ENCODE measurements at regions of chr7 and their contacts with region 1.

Region 1: DNA sequence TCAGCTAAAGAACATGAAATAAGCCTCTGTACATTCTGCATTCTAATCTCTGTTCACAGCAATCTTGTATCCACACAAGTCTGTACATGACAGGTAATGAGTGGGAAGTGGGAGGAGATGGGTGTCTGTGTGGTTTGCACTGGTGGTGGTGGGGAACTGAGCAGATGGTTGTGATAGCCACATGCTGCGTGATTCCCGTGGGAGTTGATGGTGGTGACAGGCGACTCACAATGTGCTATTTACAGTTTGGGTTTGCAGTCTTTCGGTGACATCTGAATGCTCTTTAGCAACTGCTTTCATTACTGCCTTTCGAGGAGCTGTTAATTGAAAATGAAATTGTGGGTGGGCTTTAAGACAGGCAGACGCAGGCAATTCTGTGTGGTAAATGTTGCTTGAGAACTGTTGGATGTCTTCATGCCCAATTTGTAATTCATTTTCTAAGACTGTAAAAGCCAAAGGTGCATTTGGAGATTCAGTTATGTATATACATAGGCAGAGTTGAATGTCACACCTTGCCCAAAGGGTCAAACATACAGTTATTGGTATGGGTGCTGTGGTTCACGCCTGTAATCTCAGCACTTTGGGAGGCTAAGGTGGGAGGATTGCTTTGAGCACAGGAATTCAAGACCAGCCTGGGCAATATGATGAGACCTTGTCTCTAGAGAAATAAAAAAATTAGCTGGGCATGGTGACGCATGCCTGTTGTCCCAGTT is 308.2 kb downstream of the AUTS2 start:
- DNase-seq: no peak

Region 2: GRCh38 chr7:69966766-69967591 is 60.5 kb after region 1 on chr7:
- intact Hi-C with region 1: loop called in 1 of 2 experiments (anchors 2 kb)
- DNase-seq: no peak

Measured in posterior vena cava (tissue), 2 donors.